ENCODE measurements at regions of chr1 and their contacts with region 1.

Region 1: DNA sequence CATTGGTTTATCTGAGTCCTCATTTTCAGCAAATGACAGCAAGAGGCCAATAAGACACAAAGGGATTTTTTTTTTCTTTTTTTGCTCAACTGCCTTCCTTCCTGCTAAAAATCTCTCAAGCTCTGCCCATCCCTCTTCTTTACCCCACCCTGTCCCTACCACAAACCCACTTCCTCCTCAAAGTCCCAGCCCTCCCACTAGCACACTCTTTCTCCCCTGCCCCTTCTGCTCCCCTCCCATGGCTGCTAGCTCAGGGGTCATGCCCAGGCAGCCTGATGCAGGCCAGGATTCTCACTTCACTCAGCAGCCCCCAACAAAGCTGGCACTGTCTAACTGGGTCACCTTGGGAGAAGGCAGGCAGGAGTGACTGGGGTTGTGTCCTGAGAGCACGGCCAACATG is 28.8 kb upstream of the PPP2R5A start:
- DNase-seq: peak; percentile 76
- H3K4me3 Mint-ChIP-seq: no peak overlapping the region
- H3K27ac Mint-ChIP-seq: peak overlapping the region; percentile 93
- H3K4me1 Mint-ChIP-seq: peaks cover 75% of the 10 kb centered on the region
- H3K27me3 Mint-ChIP-seq: peaks cover 1% of the 10 kb centered on the region

Region 2: GRCh38 chr1:212234431-212235395 is 21.7 kb before region 1 on chr1:
- CTCF ChIA-PET with region 1: interaction called, 3 read pairs
- POLR2A ChIA-PET with region 1: interaction called, 20 read pairs
- DNase-seq: peak; percentile 48
- H3K4me3 Mint-ChIP-seq: no peak overlapping the region
- H3K27ac Mint-ChIP-seq: peak overlapping the region; percentile 56
- H3K4me1 Mint-ChIP-seq: peaks cover 43% of the 10 kb centered on the region
- H3K27me3 Mint-ChIP-seq: peaks cover 1% of the 10 kb centered on the region

Region 3: GRCh38 chr1:212269306-212269705 is 12.9 kb after region 1 on chr1:
- CTCF ChIA-PET with region 1: interaction called, 5 read pairs
- POLR2A ChIA-PET with region 1: interaction called, 14 read pairs
- DNase-seq: no peak
- H3K4me3 Mint-ChIP-seq: no peak overlapping the region
- H3K27ac Mint-ChIP-seq: no peak overlapping the region
- H3K4me1 Mint-ChIP-seq: peaks cover 1% of the 10 kb centered on the region
- H3K27me3 Mint-ChIP-seq: peaks cover 19% of the 10 kb centered on the region

Measured in activated CD4-positive, alpha-beta memory T cell treated with anti-CD3 and anti-CD28 coated beads, Interleukin-2, amount 10 ng/mL, durations not matched to agents 7 days and 5 days (primary cell).